ENCODE measurements at regions of chr1 and their contacts with region 1.

Region 1: GRCh38 chr1:23634842-23635651 is 56.6 kb upstream of the RPL11 start:
- DNase-seq: peak; percentile 20 to 72 (median 65)
- H3K4me3 ChIP-seq: peak overlapping the region; percentile 72
- H3K4me3 Mint-ChIP-seq: peak overlapping the region; percentile 50 to 78 (median 72)
- H3K27ac ChIP-seq: no peak overlapping the region
- H3K27ac Mint-ChIP-seq: peak overlapping the region; percentile 4 to 92 (median 78)
- H3K4me1 ChIP-seq: peaks cover 14% of the 10 kb centered on the region
- H3K4me1 Mint-ChIP-seq: peaks cover 19 to 28% (median 20%) of the 10 kb centered on the region in 3 donors
- H3K27me3 ChIP-seq: no peaks in the 10 kb centered on the region
- H3K27me3 Mint-ChIP-seq: no peaks in the 10 kb centered on the region

Region 2: GRCh38 chr1:23530747-23531561 is 104.1 kb before region 1 on chr1 and contains the start of gene E2F2:
- CTCF ChIA-PET with region 1: interaction called, 20 read pairs
- POLR2A ChIA-PET with region 1: no interaction called
- DNase-seq: peak; percentile 75 to 90 (median 78)
- H3K4me3 ChIP-seq: peak within 1 kb of the TSS; percentile 49
- H3K4me3 Mint-ChIP-seq: peak within 1 kb of the TSS; percentile 81 to 94 (median 86)
- H3K27ac ChIP-seq: peak within 1 kb of the TSS; percentile 25
- H3K27ac Mint-ChIP-seq: peak within 1 kb of the TSS; percentile 80 to 95 (median 87)
- H3K4me1 ChIP-seq: peaks cover 71% of the 10 kb centered on the region
- H3K4me1 Mint-ChIP-seq: peaks cover 70 to 81% (median 75%) of the 10 kb centered on the region in 3 donors
- H3K27me3 ChIP-seq: no peaks in the 10 kb centered on the region
- H3K27me3 Mint-ChIP-seq: no peaks in the 10 kb centered on the region
- total RNA-seq, gene E2F2: 19.1 to 19.6 TPM

Region 3: DNA sequence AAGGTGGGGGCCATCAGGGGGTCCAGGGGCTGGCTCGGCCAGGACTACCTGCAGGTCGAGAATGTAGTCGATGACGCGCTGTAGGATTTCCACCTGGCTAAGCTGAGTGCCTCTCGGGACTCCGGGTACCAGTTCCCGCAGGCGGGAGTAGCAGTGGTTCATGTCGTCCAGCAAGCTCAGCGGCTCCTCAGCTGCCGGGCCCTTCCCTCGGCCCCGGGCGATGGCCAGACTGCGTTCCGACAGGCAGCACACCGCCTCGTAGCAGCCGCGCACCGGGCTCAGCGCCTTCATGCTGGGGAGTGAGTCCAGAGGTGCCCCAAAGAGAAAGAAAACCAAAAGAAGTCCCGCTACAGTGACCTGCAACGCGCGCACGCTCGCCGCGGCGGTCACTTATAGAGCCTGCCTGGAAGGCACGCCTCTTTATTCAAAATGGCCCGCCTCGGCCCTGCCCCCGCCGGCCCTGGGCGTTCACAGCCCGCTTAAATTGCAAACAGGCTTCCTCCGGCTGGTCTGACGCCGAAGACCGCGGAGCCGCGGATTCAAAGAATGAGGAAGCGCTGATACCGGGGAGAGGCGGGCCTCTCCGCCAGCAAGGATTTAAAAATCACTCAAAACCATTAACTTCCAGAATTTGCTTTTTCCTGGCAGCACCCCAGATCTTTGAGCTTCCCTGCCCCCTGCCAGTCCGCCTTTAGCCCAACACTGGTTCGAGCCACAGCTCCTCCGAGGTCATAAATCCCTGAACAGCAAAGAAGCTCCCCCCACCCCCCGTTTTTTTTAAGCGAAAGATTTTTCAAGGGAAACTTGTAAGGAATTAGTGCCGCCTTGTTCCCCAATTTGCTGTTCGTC is 75.7 kb before region 1 on chr1 and contains the start of gene ID3:
- CTCF ChIA-PET with region 1: interaction called, 268 read pairs
- POLR2A ChIA-PET with region 1: interaction called, 11 read pairs
- DNase-seq: peak; percentile 80 to 89 (median 89)
- H3K4me3 ChIP-seq: peak within 1 kb of the TSS; percentile 92
- H3K4me3 Mint-ChIP-seq: peak within 1 kb of the TSS; percentile 91 to 96 (median 93)
- H3K27ac ChIP-seq: peak within 1 kb of the TSS; percentile 80
- H3K27ac Mint-ChIP-seq: peak within 1 kb of the TSS; percentile 81 to 95 (median 91)
- H3K4me1 ChIP-seq: peaks cover 50% of the 10 kb centered on the region
- H3K4me1 Mint-ChIP-seq: peaks cover 43 to 63% (median 57%) of the 10 kb centered on the region in 3 donors
- H3K27me3 ChIP-seq: no peaks in the 10 kb centered on the region
- H3K27me3 Mint-ChIP-seq: peaks cover 0 to 8% of the 10 kb centered on the region in 2 donors
- total RNA-seq, gene ID3: 18.4 to 19.3 TPM

Region 4: GRCh38 chr1:23577056-23578004 is 57.7 kb before region 1 on chr1:
- CTCF ChIA-PET with region 1: interaction called, 19 read pairs
- POLR2A ChIA-PET with region 1: interaction called, 4 read pairs
- DNase-seq: no peak
- H3K4me3 ChIP-seq: no peak overlapping the region
- H3K4me3 Mint-ChIP-seq: peak overlapping the region in 2 of 7 donors; percentile 44 to 54
- H3K27ac ChIP-seq: no peak overlapping the region
- H3K27ac Mint-ChIP-seq: peak overlapping the region in 6 of 8 donors; percentile 17 to 86 (median 39)
- H3K4me1 ChIP-seq: peaks cover 27% of the 10 kb centered on the region
- H3K4me1 Mint-ChIP-seq: peaks cover 21 to 35% (median 26%) of the 10 kb centered on the region in 3 donors
- H3K27me3 ChIP-seq: no peaks in the 10 kb centered on the region
- H3K27me3 Mint-ChIP-seq: no peaks in the 10 kb centered on the region

Region 5: DNA sequence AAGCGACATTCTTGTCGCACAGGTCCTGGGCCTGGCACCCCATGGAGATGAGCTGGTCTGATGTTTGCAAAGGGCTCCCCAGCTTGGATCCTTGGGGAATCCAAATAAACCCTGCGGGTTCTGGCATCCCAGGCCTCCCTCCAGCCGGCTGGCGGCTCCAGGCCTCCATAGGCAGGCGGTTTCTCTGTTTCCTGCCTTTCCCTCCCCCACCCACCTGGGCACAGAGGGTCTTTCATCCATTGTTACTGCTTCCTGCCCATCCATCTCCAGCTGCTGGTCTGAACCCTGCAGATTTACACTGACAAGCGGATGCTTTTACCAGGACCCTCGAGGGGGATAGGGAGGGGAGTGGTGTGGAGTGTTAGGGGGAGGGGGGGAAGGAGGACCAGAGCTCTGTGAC is 36.6 kb before region 1 on chr1:
- CTCF ChIA-PET with region 1: interaction called, 120 read pairs
- POLR2A ChIA-PET with region 1: interaction called, 5 read pairs
- DNase-seq: no peak
- H3K4me3 ChIP-seq: no peak overlapping the region
- H3K4me3 Mint-ChIP-seq: no peak overlapping the region
- H3K27ac ChIP-seq: no peak overlapping the region
- H3K27ac Mint-ChIP-seq: peak overlapping the region in 1 of 8 donors; percentile 22
- H3K4me1 ChIP-seq: peaks cover 100% of the 10 kb centered on the region
- H3K4me1 Mint-ChIP-seq: peaks cover 80 to 94% (median 86%) of the 10 kb centered on the region in 3 donors
- H3K27me3 ChIP-seq: no peaks in the 10 kb centered on the region
- H3K27me3 Mint-ChIP-seq: no peaks in the 10 kb centered on the region

Region 6: DNA sequence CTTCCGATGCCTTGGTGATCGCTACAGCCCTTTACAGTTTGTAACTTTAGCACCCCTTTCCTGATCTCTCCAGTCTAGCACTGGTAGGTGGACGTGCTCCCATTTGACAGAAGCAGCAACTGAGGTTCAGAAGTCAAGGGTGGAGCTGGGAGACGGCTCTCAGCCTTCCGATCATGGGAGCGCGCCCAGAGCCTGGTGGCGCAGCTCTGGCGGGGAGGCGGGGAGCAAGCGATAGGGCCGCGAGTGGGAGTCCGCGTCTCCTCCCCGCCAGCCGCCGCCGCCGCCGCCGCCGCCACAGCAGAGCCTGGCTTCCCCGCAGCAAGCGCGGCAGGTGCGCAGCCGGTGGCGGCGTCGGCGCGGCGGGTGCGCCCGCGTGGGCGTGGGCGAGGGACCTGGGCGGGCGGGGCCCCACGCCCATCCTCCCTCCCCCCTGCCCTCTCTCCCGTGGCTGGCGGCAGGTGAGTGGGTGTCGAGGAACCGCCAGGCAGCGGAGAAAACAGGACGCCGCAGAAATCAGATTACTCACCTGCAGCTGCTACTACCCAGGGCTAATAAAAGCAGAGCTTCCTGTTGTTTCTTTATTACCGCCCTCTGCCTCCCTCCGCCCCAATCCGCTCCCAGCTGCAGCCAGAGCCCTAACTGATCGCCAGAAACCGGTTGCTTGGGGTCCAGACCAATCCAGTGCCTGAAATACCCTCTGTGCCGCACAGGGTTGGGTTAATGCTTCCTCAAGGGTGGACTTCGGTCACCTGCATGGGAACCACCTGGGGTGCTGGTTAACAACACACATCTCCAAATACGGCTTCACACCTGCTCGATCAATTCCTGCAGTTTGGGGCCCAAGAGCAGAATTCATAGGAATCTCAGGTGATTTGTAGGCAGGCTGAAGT is 15.5 kb before region 1 on chr1:
- CTCF ChIA-PET with region 1: interaction called, 100 read pairs
- POLR2A ChIA-PET with region 1: interaction called, 8 read pairs
- DNase-seq: peak; percentile 68 to 92 (median 82)
- H3K4me3 ChIP-seq: peak overlapping the region; percentile 61
- H3K4me3 Mint-ChIP-seq: peak overlapping the region; percentile 79 to 88 (median 83)
- H3K27ac ChIP-seq: peak overlapping the region; percentile 34
- H3K27ac Mint-ChIP-seq: peak overlapping the region; percentile 81 to 97 (median 94)
- H3K4me1 ChIP-seq: peaks cover 83% of the 10 kb centered on the region
- H3K4me1 Mint-ChIP-seq: peaks cover 71 to 88% (median 87%) of the 10 kb centered on the region in 3 donors
- H3K27me3 ChIP-seq: no peaks in the 10 kb centered on the region
- H3K27me3 Mint-ChIP-seq: peaks cover 0 to 2% of the 10 kb centered on the region in 2 donors